ENCODE measurements at regions of chr18 and their contacts with region 1.

Region 1: GRCh38 chr18:77207540-77207939 is 42.1 kb upstream of the GALR1 start:
- DNase-seq: no peak
- ATAC-seq: peak; percentile 87
- H3K4me3 Mint-ChIP-seq: peak overlapping the region; percentile 64
- H3K27ac Mint-ChIP-seq: peak overlapping the region; percentile 74
- H3K4me1 Mint-ChIP-seq: peaks cover 25% of the 10 kb centered on the region
- H3K27me3 Mint-ChIP-seq: peaks cover 2% of the 10 kb centered on the region
- CTCF ChIP-seq: no peak

Region 2: DNA sequence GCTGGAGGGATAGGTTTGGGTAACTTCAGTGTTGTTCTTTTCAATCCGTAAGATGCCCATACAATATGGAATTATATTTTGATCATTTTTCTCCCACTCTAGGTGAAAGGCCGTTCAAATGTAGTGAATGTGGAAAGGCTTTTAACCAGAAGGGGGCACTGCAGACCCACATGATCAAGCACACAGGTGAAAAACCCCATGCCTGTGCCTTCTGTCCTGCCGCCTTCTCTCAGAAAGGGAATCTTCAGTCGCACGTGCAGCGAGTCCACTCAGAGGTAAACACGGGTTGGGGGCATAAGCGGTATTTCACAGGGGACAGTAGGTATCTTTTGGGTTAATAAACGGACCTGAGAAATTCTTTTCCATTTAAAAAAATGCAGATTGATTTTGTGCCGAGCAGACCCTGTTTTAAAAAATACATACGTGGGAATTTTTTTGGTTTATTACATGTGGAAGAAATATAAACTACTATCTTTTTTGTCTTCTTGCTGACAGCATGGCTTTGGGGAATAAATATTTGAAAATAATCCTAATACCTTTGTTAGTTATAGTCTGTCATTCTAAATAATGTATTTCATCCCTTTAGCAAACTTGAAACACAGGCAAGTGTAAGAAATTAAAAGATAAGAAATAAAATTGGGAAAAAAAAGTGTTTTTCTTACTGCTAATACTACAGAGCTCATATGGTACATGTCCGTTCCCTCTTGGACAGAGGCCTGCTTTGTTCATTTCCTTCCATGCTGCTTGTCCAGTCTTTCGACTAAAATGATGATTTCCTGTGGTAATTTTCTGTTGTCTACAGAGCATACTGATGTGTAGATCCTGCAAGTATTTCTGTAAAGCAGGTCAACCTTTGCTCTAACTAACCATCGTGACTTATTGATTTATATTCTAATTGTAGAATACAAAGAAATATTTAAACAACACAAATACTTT is 331.9 kb before region 1 on chr18:
- CTCF ChIA-PET with region 1: no interaction called
- POLR2A ChIA-PET with region 1: no interaction called
- intact Hi-C with region 1: loop called (anchors 1 kb)
- DNase-seq: no peak
- ATAC-seq: no peak
- H3K4me3 Mint-ChIP-seq: no peak overlapping the region
- H3K27ac Mint-ChIP-seq: no peak overlapping the region
- H3K4me1 Mint-ChIP-seq: no peaks in the 10 kb centered on the region
- H3K27me3 Mint-ChIP-seq: no peaks in the 10 kb centered on the region
- CTCF ChIP-seq: no peak

Region 3: GRCh38 chr18:77061946-77062517 is 145.5 kb before region 1 on chr18:
- CTCF ChIA-PET with region 1: interaction called, 14 read pairs
- POLR2A ChIA-PET with region 1: interaction called, 4 read pairs
- intact Hi-C with region 1: loop called (anchors 5 kb)
- DNase-seq: no peak
- ATAC-seq: peak; percentile 30
- H3K4me3 Mint-ChIP-seq: peak overlapping the region; percentile 55
- H3K27ac Mint-ChIP-seq: peak overlapping the region; percentile 94
- H3K4me1 Mint-ChIP-seq: peaks cover 83% of the 10 kb centered on the region
- H3K27me3 Mint-ChIP-seq: no peaks in the 10 kb centered on the region
- CTCF ChIP-seq: no peak

Region 4: GRCh38 chr18:77147418-77147852 is 60.1 kb before region 1 on chr18:
- CTCF ChIA-PET with region 1: interaction called, 3 read pairs
- POLR2A ChIA-PET with region 1: no interaction called
- intact Hi-C with region 1: loop called (anchors 5 kb)
- DNase-seq: peak; percentile 37
- ATAC-seq: peak; percentile 76
- H3K4me3 Mint-ChIP-seq: peak overlapping the region; percentile 66
- H3K27ac Mint-ChIP-seq: peak overlapping the region; percentile 96
- H3K4me1 Mint-ChIP-seq: peaks cover 46% of the 10 kb centered on the region
- H3K27me3 Mint-ChIP-seq: no peaks in the 10 kb centered on the region
- CTCF ChIP-seq: no peak

Measured in activated B cell treated with CpG ODN at 0.5 μM for 24 hours (primary cell).